ENCODE measurements at regions of chr9 and their contacts with region 1.

Region 1: DNA sequence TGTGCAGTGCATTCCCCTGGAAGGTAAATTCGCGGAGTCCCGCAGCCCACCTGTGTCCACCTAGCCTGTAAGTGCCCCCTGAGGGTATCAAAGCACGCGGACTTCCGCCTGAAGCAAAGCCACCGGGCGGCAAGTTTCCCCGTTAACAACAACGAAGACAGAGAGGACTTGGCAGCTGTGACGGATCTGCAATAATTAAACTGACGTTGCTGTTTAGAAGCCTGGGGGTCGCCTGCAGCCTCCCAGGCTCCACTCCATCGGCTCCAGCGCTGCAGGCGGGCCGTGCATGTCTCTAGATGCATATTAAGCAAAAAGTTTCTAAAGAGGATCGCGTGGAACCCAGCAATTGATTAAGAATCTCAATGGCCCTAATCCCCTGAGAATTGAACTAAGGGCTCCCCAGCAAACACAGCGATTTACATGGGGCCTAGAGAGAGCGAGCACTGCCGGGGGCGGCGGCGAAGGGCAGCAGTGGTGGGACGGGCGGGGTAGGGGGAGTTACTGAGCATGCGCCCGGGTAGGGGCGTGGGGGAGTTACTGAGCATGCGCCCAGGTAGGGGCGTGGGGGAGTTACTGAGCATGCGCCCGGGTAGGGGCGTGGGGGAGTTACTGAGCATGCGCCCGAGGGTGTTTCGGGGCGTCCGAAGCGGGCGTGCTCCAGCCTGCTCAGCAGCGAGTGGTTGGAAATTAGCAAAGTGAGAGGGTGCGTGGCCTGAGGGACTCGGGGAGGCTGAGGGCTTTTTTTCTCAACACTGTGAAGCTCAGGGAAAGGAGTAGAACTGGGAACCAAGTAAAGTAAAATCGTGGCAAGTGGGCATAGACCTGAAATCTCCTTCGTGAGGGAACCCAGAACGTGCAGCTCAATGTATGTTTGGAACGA is 255.2 kb downstream of the DOCK8 start:
- DNase-seq: peak; percentile 54
- ATAC-seq: peak; percentile 96
- H3K4me3 ChIP-seq: peak overlapping the region; percentile 64 to 70
- H3K27ac ChIP-seq: peak overlapping the region; percentile 25; the same call in 1 of the 2 replicates
- H3K4me1 ChIP-seq: peaks cover 6 to 22% of the 10 kb centered on the region in 2 experiments; a peak in 3 of 4 replicates
- H3K27me3 ChIP-seq: no peaks in the 10 kb centered on the region
- CTCF ChIP-seq: no peak
- POLR2A ChIP-seq: peak; percentile 97
- RAD21 ChIP-seq: no peak

Region 2: DNA sequence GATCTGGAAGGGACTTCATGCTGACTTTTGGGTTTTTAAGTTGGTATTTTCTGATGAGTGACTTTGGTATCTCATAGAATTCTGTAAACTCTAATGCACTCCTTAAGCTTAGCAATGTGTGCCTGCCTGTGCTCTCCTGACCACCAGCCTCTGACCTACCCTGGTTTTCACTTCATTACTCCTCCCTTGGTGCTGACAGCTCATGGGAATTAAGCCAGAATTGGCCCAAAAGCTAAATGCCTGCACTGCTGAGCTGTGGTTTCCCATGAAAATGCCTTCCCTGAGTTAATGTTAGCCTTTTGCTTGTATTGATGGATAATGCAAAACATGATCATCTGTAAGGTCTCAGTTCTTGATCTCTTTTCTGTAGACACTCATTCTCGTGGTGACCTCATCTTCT is 52.7 kb after region 1 on chr9:
- CTCF ChIA-PET with region 1: no interaction called
- POLR2A ChIA-PET with region 1: no interaction called
- RAD21 ChIA-PET with region 1: no interaction called
- intact Hi-C with region 1: loop called (anchors 10 kb)
- DNase-seq: no peak
- ATAC-seq: no peak
- H3K4me3 ChIP-seq: no peak overlapping the region
- H3K27ac ChIP-seq: no peak overlapping the region
- H3K4me1 ChIP-seq: no peaks in the 10 kb centered on the region
- H3K27me3 ChIP-seq: no peaks in the 10 kb centered on the region
- CTCF ChIP-seq: no peak
- POLR2A ChIP-seq: no peak
- RAD21 ChIP-seq: no peak

Region 3: GRCh38 chr9:693201-694091 is 223.5 kb after region 1 on chr9:
- CTCF ChIA-PET with region 1: no interaction called
- POLR2A ChIA-PET with region 1: no interaction called
- RAD21 ChIA-PET with region 1: no interaction called
- intact Hi-C with region 1: no loop called
- DNase-seq: no peak
- ATAC-seq: no peak
- H3K4me3 ChIP-seq: no peak overlapping the region
- H3K27ac ChIP-seq: no peak overlapping the region
- H3K4me1 ChIP-seq: peaks cover 4 to 5% of the 10 kb centered on the region in 2 experiments; a peak in 2 of 4 replicates
- H3K27me3 ChIP-seq: no peaks in the 10 kb centered on the region
- CTCF ChIP-seq: no peak
- POLR2A ChIP-seq: no peak
- RAD21 ChIP-seq: no peak

Region 4: GRCh38 chr9:1231998-1232919 is 762.3 kb after region 1 on chr9:
- CTCF ChIA-PET with region 1: no interaction called
- POLR2A ChIA-PET with region 1: no interaction called
- RAD21 ChIA-PET with region 1: no interaction called
- intact Hi-C with region 1: no loop called
- DNase-seq: no peak
- ATAC-seq: no peak
- H3K4me3 ChIP-seq: no peak overlapping the region
- H3K27ac ChIP-seq: no peak overlapping the region
- H3K4me1 ChIP-seq: no peaks in the 10 kb centered on the region
- H3K27me3 ChIP-seq: no peaks in the 10 kb centered on the region
- CTCF ChIP-seq: no peak
- POLR2A ChIP-seq: no peak
- RAD21 ChIP-seq: no peak

Measured in HCT116 (cell line).